GM12878 (cell line): ENCODE measurements at regions of chr1 and their contacts with region 1.

Region 1: GRCh38 chr1:110766025-110766647 is 91.4 kb upstream of the KCNA3 start:
- DNase-seq: no peak
- ATAC-seq: peak; percentile 86
- H3K4me3 ChIP-seq: 0 out of 2 replicates have a peak overlapping the region, but pooled peaks have one; percentile 43
- H3K27ac ChIP-seq: no peak overlapping the region
- H3K4me1 ChIP-seq: peaks cover 11% of the 10 kb centered on the region
- H3K27me3 ChIP-seq: no peaks in the 10 kb centered on the region
- CTCF ChIP-seq: peak; percentile 74 to 94 (median 85)
- EP300 ChIP-seq: no peak
- POLR2A ChIP-seq: no peak
- RAD21 ChIP-seq: peak; percentile 97

Region 2: GRCh38 chr1:110619412-110620249 is 146.5 kb before region 1 on chr1:
- CTCF ChIA-PET with region 1: interaction called, 180 read pairs
- POLR2A ChIA-PET with region 1: interaction called, 5 read pairs
- RAD21 ChIA-PET with region 1: interaction called, 113 read pairs
- SMC1A ChIA-PET with region 1: interaction called, 119 read pairs
- in situ Hi-C with region 1: no loop called
- intact Hi-C with region 1: loop called (anchors 1 kb)
- DNase-seq: peak; percentile 69
- ATAC-seq: peak; percentile 95
- H3K4me3 ChIP-seq: peak overlapping the region; percentile 64
- H3K27ac ChIP-seq: peak overlapping the region; percentile 57
- H3K4me1 ChIP-seq: peaks cover 16% of the 10 kb centered on the region
- H3K27me3 ChIP-seq: peaks cover 0 to 2% of the 10 kb centered on the region in 2 experiments; a peak in 1 of 4 replicates
- CTCF ChIP-seq: peak; percentile 96 to 97 (median 96)
- EP300 ChIP-seq: 0 out of 4 replicates have a peak, but pooled peaks of 1 of the 2 experiments have one; percentile 26
- POLR2A ChIP-seq: peak; percentile 59
- RAD21 ChIP-seq: peak; percentile 86

Region 3: DNA sequence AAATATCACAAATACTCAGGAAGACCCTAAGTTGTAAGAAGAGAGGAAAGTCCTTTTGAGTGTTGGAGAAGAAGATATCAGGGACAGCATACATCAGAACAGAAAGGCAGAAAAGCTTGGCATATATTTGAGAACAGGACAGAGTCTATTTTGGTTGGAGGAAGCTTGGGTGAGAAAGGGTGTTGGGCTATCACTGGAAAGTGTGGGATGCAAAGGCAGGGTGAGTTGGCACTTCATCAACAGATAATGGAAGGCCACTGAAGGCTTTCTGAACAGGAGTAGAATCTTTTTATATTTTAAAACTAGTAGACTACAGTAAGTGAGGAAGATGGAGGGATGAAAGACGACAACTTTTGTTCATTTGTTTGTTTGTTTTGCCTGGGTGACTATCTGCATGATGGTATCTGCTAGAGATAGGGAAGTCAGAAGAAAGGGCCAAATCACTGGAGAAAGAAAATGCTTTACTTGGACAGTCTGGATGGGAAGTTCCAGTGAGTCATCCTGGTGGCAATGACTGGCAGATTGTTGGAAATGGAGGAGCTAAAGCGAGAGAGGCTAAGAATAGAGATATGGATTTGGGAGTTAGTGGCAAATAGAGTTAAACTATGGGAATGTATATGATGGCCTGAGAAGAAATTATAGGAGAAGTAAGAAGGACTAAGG is 126.3 kb before region 1 on chr1:
- CTCF ChIA-PET with region 1: interaction called, 86 read pairs
- POLR2A ChIA-PET with region 1: interaction called, 5 read pairs
- RAD21 ChIA-PET with region 1: interaction called, 66 read pairs
- SMC1A ChIA-PET with region 1: interaction called, 44 read pairs
- in situ Hi-C with region 1: no loop called
- intact Hi-C with region 1: no loop called
- DNase-seq: no peak
- ATAC-seq: no peak
- H3K4me3 ChIP-seq: no peak overlapping the region
- H3K27ac ChIP-seq: no peak overlapping the region
- H3K4me1 ChIP-seq: peaks cover 48% of the 10 kb centered on the region
- H3K27me3 ChIP-seq: no peaks in the 10 kb centered on the region
- CTCF ChIP-seq: no peak
- EP300 ChIP-seq: no peak
- POLR2A ChIP-seq: no peak
- RAD21 ChIP-seq: no peak

Region 4: DNA sequence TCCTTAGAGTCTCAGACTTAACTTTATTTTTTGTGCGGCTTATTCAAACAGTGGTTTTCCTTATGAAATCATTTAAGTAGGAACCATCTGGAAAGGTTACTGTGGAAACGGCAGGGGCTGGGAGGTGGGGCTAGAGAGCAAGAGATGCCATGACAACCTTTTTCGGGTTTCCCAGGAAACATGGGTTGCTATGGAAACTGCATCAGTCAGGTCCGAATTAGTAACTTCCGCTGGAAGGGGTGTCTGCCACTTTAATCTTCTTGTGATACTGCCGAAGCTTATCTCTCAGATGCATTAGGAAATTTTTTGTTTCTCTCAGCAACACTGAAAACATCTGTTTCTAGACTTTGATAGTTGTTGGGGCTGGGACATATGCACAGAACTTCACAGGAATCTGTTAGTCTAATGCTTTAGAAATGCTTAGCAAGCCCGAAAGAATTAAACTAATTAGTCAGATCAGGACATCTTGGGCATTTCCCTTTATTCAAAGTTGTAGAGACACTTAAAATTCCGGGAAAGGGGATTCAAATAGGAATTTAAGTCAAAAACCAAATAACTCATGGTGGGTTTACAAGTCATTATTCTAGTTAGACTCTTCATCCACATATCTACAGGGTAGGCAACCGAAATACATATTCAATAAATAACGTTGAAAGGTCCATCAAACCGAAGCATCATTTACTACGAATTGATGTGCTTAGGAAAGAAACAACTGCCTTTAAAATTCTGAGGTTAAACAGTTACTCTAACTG is 94.0 kb before region 1 on chr1:
- CTCF ChIA-PET with region 1: interaction called, 11 read pairs
- POLR2A ChIA-PET with region 1: no interaction called
- RAD21 ChIA-PET with region 1: interaction called, 3 read pairs
- SMC1A ChIA-PET with region 1: interaction called, 3 read pairs
- in situ Hi-C with region 1: no loop called
- intact Hi-C with region 1: no loop called
- DNase-seq: no peak
- ATAC-seq: peak; percentile 12
- H3K4me3 ChIP-seq: peak overlapping the region; percentile 64
- H3K27ac ChIP-seq: peak overlapping the region; percentile 40; the same call in 1 of the 2 replicates
- H3K4me1 ChIP-seq: peaks cover 29% of the 10 kb centered on the region
- H3K27me3 ChIP-seq: peaks cover 0 to 4% of the 10 kb centered on the region in 2 experiments; a peak in 2 of 4 replicates
- CTCF ChIP-seq: no peak
- EP300 ChIP-seq: no peak
- POLR2A ChIP-seq: no peak
- RAD21 ChIP-seq: no peak

Region 5: GRCh38 chr1:110726755-110727154 is 39.4 kb before region 1 on chr1:
- CTCF ChIA-PET with region 1: interaction called, 8 read pairs
- POLR2A ChIA-PET with region 1: no interaction called
- RAD21 ChIA-PET with region 1: interaction called, 3 read pairs
- SMC1A ChIA-PET with region 1: interaction called, 16 read pairs
- in situ Hi-C with region 1: no loop called
- intact Hi-C with region 1: no loop called
- DNase-seq: peak; percentile 57
- ATAC-seq: peak; percentile 96
- H3K4me3 ChIP-seq: peak overlapping the region; percentile 66; the same call in 1 of the 2 replicates
- H3K27ac ChIP-seq: peak overlapping the region; percentile 60
- H3K4me1 ChIP-seq: peaks cover 24% of the 10 kb centered on the region
- H3K27me3 ChIP-seq: no peaks in the 10 kb centered on the region
- CTCF ChIP-seq: no peak
- EP300 ChIP-seq: no peak
- POLR2A ChIP-seq: no peak
- RAD21 ChIP-seq: no peak

Region 6: DNA sequence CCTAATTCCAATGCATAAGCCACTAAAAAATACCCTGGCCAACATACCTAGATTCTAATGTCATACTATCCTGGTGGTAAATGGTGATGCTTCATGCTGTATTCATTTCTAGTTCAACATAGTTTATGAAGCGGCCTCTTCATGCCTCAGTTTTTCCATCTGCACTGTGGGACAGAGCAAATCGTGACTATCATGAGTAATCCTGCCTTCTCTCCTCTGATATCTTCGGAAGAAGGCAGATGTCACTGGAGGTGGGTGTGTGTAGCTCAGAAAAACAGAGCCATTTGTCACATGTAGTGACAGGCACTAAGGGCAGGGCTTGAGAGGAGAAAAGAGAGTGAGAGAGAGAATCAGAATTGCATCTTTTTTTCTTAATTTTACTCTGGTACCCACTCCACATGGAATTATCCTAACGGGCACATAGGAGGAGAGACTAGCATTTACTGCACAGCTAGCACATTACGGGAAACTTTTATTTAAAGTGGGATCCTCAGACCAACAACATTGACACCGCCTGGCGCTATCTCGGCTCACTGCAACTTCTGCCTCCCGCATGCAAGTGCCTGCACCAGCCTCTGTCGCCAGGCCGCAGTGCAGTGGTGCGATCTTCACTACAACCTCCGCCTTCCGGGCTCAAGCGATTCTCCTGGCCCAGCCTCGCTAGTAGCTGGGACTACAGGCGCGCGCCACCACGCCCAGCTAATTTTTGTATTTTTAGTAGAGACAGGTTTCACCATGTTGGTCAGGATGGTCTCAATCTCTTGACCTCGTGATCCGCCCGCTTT is 13.0 kb before region 1 on chr1:
- CTCF ChIA-PET with region 1: interaction called, 13 read pairs
- POLR2A ChIA-PET with region 1: no interaction called
- RAD21 ChIA-PET with region 1: interaction called, 8 read pairs
- SMC1A ChIA-PET with region 1: interaction called, 19 read pairs
- in situ Hi-C with region 1: no loop called
- intact Hi-C with region 1: no loop called
- DNase-seq: no peak
- ATAC-seq: no peak
- H3K4me3 ChIP-seq: no peak overlapping the region
- H3K27ac ChIP-seq: no peak overlapping the region
- H3K4me1 ChIP-seq: no peaks in the 10 kb centered on the region
- H3K27me3 ChIP-seq: no peaks in the 10 kb centered on the region
- CTCF ChIP-seq: no peak
- EP300 ChIP-seq: no peak
- POLR2A ChIP-seq: no peak
- RAD21 ChIP-seq: no peak

Region 7: GRCh38 chr1:110787328-110788071 is 21.4 kb after region 1 on chr1:
- CTCF ChIA-PET with region 1: interaction called, 93 read pairs
- POLR2A ChIA-PET with region 1: no interaction called
- RAD21 ChIA-PET with region 1: interaction called, 11 read pairs
- SMC1A ChIA-PET with region 1: interaction called, 86 read pairs
- in situ Hi-C with region 1: no loop called
- intact Hi-C with region 1: no loop called
- DNase-seq: peak; percentile 76
- ATAC-seq: peak; percentile 83
- H3K4me3 ChIP-seq: no peak overlapping the region
- H3K27ac ChIP-seq: peak overlapping the region; percentile 98
- H3K4me1 ChIP-seq: peaks cover 29% of the 10 kb centered on the region
- H3K27me3 ChIP-seq: no peaks in the 10 kb centered on the region
- CTCF ChIP-seq: no peak
- EP300 ChIP-seq: no peak
- POLR2A ChIP-seq: no peak
- RAD21 ChIP-seq: no peak

Region 8: GRCh38 chr1:111006541-111006940 is 240.4 kb after region 1 on chr1:
- CTCF ChIA-PET with region 1: no interaction called
- POLR2A ChIA-PET with region 1: no interaction called
- RAD21 ChIA-PET with region 1: no interaction called
- SMC1A ChIA-PET with region 1: no interaction called
- in situ Hi-C with region 1: no loop called
- intact Hi-C with region 1: no loop called
- DNase-seq: no peak
- ATAC-seq: no peak
- H3K4me3 ChIP-seq: no peak overlapping the region
- H3K27ac ChIP-seq: no peak overlapping the region
- H3K4me1 ChIP-seq: no peaks in the 10 kb centered on the region
- H3K27me3 ChIP-seq: no peaks in the 10 kb centered on the region
- CTCF ChIP-seq: no peak
- EP300 ChIP-seq: no peak
- POLR2A ChIP-seq: no peak
- RAD21 ChIP-seq: no peak